ENCODE measurements at regions of chr10 and their contacts with region 1.

Region 1: GRCh38 chr10:18104223-18104872 is 35.9 kb upstream of the CACNB2 start:
- DNase-seq: peak; percentile 43
- ATAC-seq: peak; percentile 44; the same call in 1 of the 2 replicates
- H3K4me3 ChIP-seq: no peak overlapping the region
- H3K27ac ChIP-seq: no peak overlapping the region
- H3K4me1 ChIP-seq: no peaks in the 10 kb centered on the region
- H3K27me3 ChIP-seq: peaks cover 32% of the 10 kb centered on the region
- CTCF ChIP-seq: peak; percentile 64
- POLR2A ChIP-seq: no peak
- RAD21 ChIP-seq: peak; percentile 65

Region 2: GRCh38 chr10:17454161-17455014 is 650.0 kb before region 1 on chr10 and contains the start of gene ST8SIA6:
- CTCF ChIA-PET with region 1: no interaction called
- POLR2A ChIA-PET with region 1: no interaction called
- dilution Hi-C with region 1: no loop called
- in situ Hi-C with region 1: no loop called
- intact Hi-C with region 1: no loop called
- DNase-seq: peak; percentile 47
- ATAC-seq: peak; percentile 93
- H3K4me3 ChIP-seq: peak within 1 kb of the TSS; percentile 52
- H3K27ac ChIP-seq: no peak within 1 kb of the TSS
- H3K4me1 ChIP-seq: peaks cover 2% of the 10 kb centered on the region; the same call in 1 of the 2 replicates
- H3K27me3 ChIP-seq: peaks cover 10% of the 10 kb centered on the region; the same call in 1 of the 2 replicates
- CTCF ChIP-seq: no peak
- POLR2A ChIP-seq: no peak
- RAD21 ChIP-seq: no peak; the same call in 1 of the 2 replicates
- total RNA-seq, gene ST8SIA6: 0.18 and 0.56 TPM in 2 replicates

Region 3: DNA sequence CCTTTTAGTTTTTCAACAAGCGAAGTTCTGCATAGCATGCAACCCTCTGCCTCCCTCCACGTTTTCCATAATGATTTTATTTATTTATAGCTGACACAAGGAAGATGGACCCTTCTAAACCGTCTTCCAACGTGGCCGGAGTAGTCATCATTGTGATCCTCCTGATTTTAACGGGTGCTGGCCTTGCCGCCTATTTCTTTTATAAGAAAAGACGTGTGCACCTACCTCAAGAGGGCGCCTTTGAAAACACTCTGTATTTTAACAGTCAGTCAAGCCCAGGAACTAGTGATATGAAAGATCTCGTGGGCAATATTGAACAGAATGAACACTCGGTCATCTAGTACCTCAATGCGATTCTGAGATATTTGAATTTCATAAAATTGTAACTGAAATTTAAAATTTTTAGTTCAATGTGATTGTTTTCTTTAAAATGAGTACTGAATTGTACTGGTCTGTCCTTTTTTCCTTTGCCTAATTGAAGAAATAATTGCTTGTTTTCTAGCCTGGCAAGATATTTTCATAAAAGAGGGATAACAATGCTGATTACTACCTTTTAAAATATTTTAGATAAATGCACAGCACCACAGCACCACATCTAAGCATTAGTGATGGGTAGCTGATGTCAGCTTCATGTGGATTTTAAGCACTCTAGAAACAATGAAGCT is 194.1 kb before region 1 on chr10:
- CTCF ChIA-PET with region 1: no interaction called
- POLR2A ChIA-PET with region 1: no interaction called
- dilution Hi-C with region 1: no loop called
- in situ Hi-C with region 1: no loop called
- intact Hi-C with region 1: loop called (anchors 1 kb)
- DNase-seq: peak; percentile 63
- ATAC-seq: peak; percentile 49; the same call in 1 of the 2 replicates
- H3K4me3 ChIP-seq: no peak overlapping the region
- H3K27ac ChIP-seq: no peak overlapping the region
- H3K4me1 ChIP-seq: no peaks in the 10 kb centered on the region
- H3K27me3 ChIP-seq: peaks cover 4% of the 10 kb centered on the region; the same call in 1 of the 2 replicates
- CTCF ChIP-seq: peak; percentile 65
- POLR2A ChIP-seq: no peak
- RAD21 ChIP-seq: peak; percentile 63